ENCODE measurements at regions of chr1 and their contacts with region 1.

Region 1: GRCh38 chr1:84753516-84754385 is 63.5 kb upstream of the SSX2IP start:
- DNase-seq: peak; percentile 75 to 77 (median 76)
- ATAC-seq: peak; percentile 87
- H3K4me3 ChIP-seq: no peak overlapping the region
- H3K27ac ChIP-seq: no peak overlapping the region
- H3K4me1 ChIP-seq: no peaks in the 10 kb centered on the region
- H3K27me3 ChIP-seq: no peaks in the 10 kb centered on the region
- CTCF ChIP-seq: peak; percentile 80 to 96 (median 90)
- POLR2A ChIP-seq: no peak

Region 2: DNA sequence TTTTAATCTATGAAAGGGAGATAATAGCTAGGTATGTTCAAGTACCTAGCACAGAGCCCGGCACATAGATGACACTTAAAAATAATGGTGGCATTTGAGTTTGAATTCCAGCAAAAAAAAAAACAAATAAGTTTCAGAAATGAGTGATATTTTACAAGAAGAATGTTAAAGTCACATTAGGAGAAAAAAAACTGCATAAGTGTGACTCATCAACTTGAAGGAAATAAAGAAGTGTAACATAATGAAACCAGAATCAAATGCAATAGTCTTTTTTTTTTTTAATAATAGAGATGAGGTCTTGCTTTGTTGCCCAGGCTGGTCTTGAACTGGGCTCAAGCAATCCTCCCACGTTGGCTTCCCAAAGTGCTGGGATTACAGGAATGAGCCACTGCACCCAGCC is 338.4 kb before region 1 on chr1:
- intact Hi-C with region 1: no loop called
- DNase-seq: no peak
- ATAC-seq: no peak
- H3K4me3 ChIP-seq: no peak overlapping the region
- H3K27ac ChIP-seq: no peak overlapping the region
- H3K4me1 ChIP-seq: peaks cover 4% of the 10 kb centered on the region
- H3K27me3 ChIP-seq: no peaks in the 10 kb centered on the region
- CTCF ChIP-seq: no peak
- POLR2A ChIP-seq: no peak

Region 3: DNA sequence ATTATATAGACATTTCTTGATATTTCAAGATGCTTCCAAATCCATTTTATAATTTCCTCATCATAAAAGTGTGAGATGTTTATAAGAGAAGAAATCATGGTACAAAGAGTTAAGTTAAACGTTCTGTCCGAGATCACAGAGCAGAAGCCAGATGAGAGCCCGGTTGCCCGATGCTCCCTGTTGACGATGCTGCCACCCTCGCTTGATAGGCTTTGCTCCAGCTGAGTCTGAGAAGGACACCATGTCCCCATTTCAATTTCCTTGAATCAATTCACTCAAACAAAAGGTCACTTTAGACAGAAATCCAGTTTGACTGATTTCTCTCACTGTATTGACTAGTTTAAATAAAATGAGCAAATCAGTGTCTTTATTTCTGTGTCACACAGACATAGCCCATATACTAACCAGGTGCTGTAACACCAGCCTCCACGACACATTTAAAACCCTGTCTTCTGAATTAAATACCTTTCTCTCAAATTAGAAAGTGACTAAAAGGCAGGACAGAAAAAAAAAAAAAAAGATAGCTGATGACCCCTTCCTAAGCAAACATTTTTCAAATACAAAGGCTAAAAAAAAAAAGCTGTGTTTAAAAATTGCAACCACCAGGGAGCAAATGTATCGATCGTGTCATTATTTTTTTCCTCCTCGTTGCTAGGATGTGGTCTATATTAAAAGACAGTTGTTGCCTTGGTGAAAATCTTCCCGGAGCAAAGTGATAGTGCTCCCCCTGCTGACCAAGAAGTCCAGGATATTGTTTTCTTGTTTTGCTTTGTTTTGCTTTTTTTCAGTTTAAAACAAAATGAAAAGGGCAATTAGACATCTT is 320.3 kb before region 1 on chr1:
- intact Hi-C with region 1: loop called (anchors 5 kb)
- DNase-seq: peak; percentile 55 to 79 (median 64)
- ATAC-seq: peak; percentile 92
- H3K4me3 ChIP-seq: no peak overlapping the region
- H3K27ac ChIP-seq: peak overlapping the region in 1 of 4 donors; percentile 30
- H3K4me1 ChIP-seq: peaks cover 3% of the 10 kb centered on the region
- H3K27me3 ChIP-seq: no peaks in the 10 kb centered on the region
- CTCF ChIP-seq: peak; percentile 53 to 91 (median 89)
- POLR2A ChIP-seq: no peak

Region 4: GRCh38 chr1:84620720-84621313 is 132.9 kb before region 1 on chr1:
- intact Hi-C with region 1: loop called (anchors 10 kb)
- DNase-seq: peak; percentile 71 to 77 (median 77)
- ATAC-seq: peak; percentile 93
- H3K4me3 ChIP-seq: peak overlapping the region; percentile 14 to 45
- H3K27ac ChIP-seq: peak overlapping the region in 3 of 4 donors; percentile 50 to 78 (median 57)
- H3K4me1 ChIP-seq: peaks cover 12% of the 10 kb centered on the region
- H3K27me3 ChIP-seq: no peaks in the 10 kb centered on the region
- CTCF ChIP-seq: peak; percentile 80 to 99 (median 97)
- POLR2A ChIP-seq: peak; percentile 23 to 38 (median 27)

Region 5: DNA sequence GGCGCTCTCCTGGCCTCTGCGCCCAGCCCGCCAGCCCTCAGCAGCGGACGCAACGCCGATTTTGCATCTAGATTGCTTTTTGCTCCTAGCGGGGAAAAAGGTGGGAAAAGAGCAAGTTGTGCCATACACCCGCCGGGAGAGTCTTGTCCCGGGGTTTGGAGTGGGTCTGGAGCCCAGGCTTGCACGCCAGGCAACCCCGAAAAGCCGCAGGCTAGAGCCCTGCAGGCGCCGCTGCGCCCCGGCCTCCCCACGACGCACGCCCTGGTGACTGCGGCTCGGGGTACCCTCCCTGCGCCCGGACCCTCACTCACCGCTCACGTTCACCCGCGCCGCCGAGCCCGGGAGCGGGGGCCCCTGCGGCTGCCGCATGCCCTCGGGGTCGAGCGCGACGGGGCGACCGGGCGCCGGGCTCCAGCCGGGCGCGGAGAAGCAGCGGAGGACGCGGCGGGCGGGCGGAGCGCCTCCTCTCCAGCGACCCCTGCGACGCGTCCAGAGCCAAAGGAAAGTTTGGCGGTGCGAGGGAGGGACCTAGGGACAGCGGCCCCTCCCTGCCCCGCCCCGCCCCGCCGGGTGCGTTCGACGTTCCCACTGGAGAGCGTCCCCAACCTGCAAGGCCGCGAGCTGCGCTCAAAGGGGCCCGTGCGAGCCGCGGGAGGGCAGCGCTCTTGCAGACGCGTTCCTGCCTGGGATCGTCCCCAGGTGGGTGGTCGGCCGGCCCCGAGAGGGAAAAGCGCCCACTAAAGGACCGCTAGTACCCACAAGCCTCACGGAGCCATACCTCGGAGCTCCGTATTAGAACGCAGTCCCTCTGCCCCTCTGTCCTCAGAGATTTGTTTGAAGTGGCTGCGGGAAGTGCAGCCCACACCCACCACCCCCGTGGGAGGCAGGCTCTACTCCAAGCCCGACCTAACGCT is 139.2 kb after region 1 on chr1 and contains the start of gene LPAR3:
- intact Hi-C with region 1: no loop called
- DNase-seq: peak; percentile 75 to 89 (median 80)
- ATAC-seq: peak; percentile 94
- H3K4me3 ChIP-seq: peak within 1 kb of the TSS; percentile 13 to 37
- H3K27ac ChIP-seq: peak within 1 kb of the TSS; percentile 25 to 73 (median 68)
- H3K4me1 ChIP-seq: peaks cover 28% of the 10 kb centered on the region
- H3K27me3 ChIP-seq: no peaks in the 10 kb centered on the region
- CTCF ChIP-seq: peak in 1 of 7 experiments; percentile 8
- POLR2A ChIP-seq: peak; percentile 62 to 77 (median 70)
- total RNA-seq, gene LPAR3: 17.1 to 19.7 TPM

Measured in body of pancreas (tissue), 4 donors.